Ascending aorta (tissue), 2 donors: ENCODE measurements at regions of chr18 and their contacts with region 1.

Region 1: GRCh38 chr18:35267161-35267651 is 22.8 kb downstream of the ZSCAN30 start:
- DNase-seq: peak; percentile 28 to 88
- H3K4me3 ChIP-seq: peak overlapping the region; percentile 60 to 83
- H3K27ac ChIP-seq: peak overlapping the region; percentile 79 to 85
- H3K4me1 ChIP-seq: peaks cover 0 to 4% of the 10 kb centered on the region in 2 donors
- H3K27me3 ChIP-seq: no peaks in the 10 kb centered on the region
- CTCF ChIP-seq: peak in 1 of 3 experiments; percentile 8

Region 2: DNA sequence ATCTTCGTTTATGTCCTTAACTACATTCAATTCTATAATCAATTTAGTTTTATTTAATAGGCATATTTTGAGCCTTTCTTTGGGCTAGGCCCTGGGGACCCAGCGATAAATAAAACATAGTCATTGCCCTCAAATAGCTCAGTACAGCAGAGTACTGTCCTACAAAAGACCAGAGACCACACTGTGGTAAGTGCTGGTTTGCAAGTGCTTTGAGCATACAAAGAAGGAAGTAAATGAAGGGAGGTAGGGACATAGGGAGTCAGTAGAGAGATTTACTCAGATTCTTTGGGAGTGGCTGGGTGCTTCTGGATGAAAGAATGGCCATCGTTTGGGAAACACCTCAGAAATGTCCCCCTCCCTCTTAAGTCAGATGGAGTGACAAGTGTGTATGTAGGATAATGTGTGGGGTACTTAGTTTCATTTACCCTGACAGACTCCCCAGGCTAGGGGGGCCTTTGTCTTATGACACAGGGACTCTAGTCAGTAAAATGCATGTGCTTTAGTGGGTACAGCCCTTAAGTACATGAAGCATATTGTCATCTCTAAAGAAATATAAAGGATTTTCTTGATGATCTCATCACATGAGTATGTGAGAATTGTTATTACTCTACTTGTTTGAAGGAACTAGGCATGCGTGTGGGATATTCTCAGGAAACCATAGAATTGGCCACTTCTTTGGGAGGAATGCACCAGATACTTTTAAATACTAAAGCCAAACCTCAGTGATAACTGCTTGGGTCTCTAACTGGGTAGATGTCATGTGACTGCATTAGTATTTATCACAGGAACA is 190.9 kb before region 1 on chr18:
- intact Hi-C with region 1: no loop called
- DNase-seq: no peak
- H3K4me3 ChIP-seq: no peak overlapping the region
- H3K27ac ChIP-seq: peak overlapping the region in 1 of 2 donors; percentile 41
- H3K4me1 ChIP-seq: peaks cover 6 to 40% of the 10 kb centered on the region in 2 donors
- H3K27me3 ChIP-seq: no peaks in the 10 kb centered on the region
- CTCF ChIP-seq: no peak

Region 3: GRCh38 chr18:35290073-35290735 is 23.0 kb after region 1 on chr18 and contains the start of gene ZSCAN30:
- intact Hi-C with region 1: loop called (anchors 1 kb)
- DNase-seq: peak; percentile 79 to 97
- H3K4me3 ChIP-seq: peak within 1 kb of the TSS; percentile 73 to 86
- H3K27ac ChIP-seq: peak within 1 kb of the TSS; percentile 82 to 86
- H3K4me1 ChIP-seq: peaks cover 3 to 11% of the 10 kb centered on the region in 2 donors
- H3K27me3 ChIP-seq: no peaks in the 10 kb centered on the region
- CTCF ChIP-seq: no peak
- total RNA-seq, gene ZSCAN30: 7.5 TPM

Region 4: DNA sequence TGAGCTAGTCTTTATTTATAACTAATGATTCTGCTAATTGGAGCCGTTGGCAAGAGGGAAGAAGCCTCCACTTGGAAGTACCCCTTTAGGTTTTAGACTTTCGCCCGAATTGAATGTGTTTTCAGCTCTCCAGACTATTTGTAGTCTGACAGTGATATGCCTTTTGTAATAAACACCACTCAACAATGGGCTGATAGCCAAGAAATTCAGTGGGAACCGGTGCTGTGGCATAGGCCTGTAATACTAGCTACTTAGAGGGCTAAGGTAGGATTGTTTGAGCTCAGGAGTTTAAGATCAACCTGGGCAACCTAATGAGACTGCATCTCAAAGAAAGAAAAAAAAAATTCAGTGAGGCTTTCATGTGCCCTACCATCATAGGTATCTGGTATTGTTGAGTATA is 36.4 kb after region 1 on chr18:
- intact Hi-C with region 1: loop called (anchors 5 kb)
- DNase-seq: no peak
- H3K4me3 ChIP-seq: no peak overlapping the region
- H3K27ac ChIP-seq: no peak overlapping the region
- H3K4me1 ChIP-seq: no peaks in the 10 kb centered on the region
- H3K27me3 ChIP-seq: no peaks in the 10 kb centered on the region
- CTCF ChIP-seq: no peak